ENCODE measurements at regions of chr2 and their contacts with region 1.

Region 1: GRCh38 chr2:235779444-235779896 is 285.6 kb downstream of the AGAP1 start:
- DNase-seq: peak; percentile 51
- H3K4me3 ChIP-seq: no peak overlapping the region
- H3K27ac ChIP-seq: no peak overlapping the region
- H3K27me3 ChIP-seq: no peaks in the 10 kb centered on the region
- CTCF ChIP-seq: peak; percentile 97

Region 2: DNA sequence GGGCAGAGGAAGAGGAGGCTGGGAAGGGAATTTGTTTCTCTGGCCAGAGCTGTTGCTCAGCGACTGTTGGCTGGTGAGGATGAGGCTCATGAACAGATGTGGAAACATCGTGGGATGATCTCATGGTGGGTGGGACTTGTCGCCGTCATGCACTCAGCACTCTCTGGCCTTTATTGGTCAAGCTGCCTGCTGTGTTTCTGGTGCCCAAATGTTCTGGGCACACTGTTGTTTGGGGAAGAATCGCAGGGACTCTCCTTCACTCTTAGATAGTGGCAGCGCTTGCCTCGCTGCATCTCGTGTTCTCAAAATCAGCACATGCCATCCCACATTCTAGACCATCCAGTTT is 140.1 kb before region 1 on chr2:
- in situ Hi-C with region 1: no loop called
- DNase-seq: peak; percentile 90
- H3K4me3 ChIP-seq: no peak overlapping the region
- H3K27ac ChIP-seq: peak overlapping the region; percentile 48
- H3K27me3 ChIP-seq: no peaks in the 10 kb centered on the region
- CTCF ChIP-seq: no peak

Region 3: GRCh38 chr2:235996419-235996818 is 216.9 kb after region 1 on chr2:
- in situ Hi-C with region 1: no loop called
- DNase-seq: no peak
- H3K4me3 ChIP-seq: no peak overlapping the region
- H3K27ac ChIP-seq: no peak overlapping the region
- H3K27me3 ChIP-seq: no peaks in the 10 kb centered on the region
- CTCF ChIP-seq: no peak

Region 4: GRCh38 chr2:236180831-236181453 is 401.5 kb after region 1 on chr2:
- in situ Hi-C with region 1: loop called (anchors 25 kb)
- DNase-seq: peak; percentile 70
- H3K4me3 ChIP-seq: no peak overlapping the region
- H3K27ac ChIP-seq: no peak overlapping the region
- H3K27me3 ChIP-seq: no peaks in the 10 kb centered on the region
- CTCF ChIP-seq: peak; percentile 77